ENCODE measurements at regions of chr9 and their contacts with region 1.

Region 1: GRCh38 chr9:19028835-19029451 is 4.1 kb downstream of the SAXO1 start:
- DNase-seq: peak; percentile 81
- H3K4me3 Mint-ChIP-seq: no peak overlapping the region
- H3K27ac Mint-ChIP-seq: no peak overlapping the region
- H3K4me1 Mint-ChIP-seq: peaks cover 11% of the 10 kb centered on the region
- H3K27me3 Mint-ChIP-seq: peaks cover 11% of the 10 kb centered on the region

Region 2: DNA sequence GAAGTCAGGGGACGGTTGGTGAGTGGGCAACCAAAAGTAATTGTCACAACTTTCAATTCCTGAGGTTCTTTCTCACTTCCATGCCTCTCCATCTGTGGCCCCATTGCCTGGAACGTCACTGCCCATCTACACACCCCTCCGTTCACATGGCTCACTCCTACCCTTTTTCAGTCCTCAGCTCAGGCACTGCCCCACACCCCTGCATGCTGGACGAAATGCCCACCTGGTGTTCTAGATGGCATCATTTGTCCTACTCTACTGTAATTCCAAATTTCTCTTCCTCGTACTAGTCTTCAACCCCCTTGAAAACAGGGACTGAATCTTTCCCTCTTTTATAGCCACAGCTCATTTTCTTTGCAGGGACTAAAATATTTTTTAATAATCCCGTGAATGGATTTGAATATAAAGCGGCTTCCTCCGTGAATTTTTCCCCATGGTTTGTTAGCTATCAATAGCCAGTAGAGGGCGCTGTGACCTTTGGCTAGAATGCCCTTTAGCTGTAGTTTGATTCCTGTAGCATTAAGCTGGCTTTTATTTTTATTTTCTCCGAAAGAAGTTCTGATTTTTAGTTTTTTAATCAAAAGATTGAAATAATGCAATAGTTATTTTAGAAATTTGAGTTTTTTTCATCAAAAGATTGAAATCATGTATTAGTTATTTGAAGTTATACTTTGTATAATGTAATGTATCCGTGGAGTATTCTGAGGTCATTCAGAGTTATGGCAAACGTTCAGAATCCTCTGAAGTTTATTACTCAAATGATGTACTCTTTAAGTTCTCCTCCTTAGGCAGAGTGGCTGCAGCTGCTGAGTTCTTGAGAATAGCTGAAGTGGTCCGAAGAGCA is 1218.0 kb before region 1 on chr9:
- intact Hi-C with region 1: loop called (anchors 5 kb)
- DNase-seq: peak; percentile 80
- H3K4me3 Mint-ChIP-seq: no peak overlapping the region
- H3K27ac Mint-ChIP-seq: no peak overlapping the region
- H3K4me1 Mint-ChIP-seq: no peaks in the 10 kb centered on the region
- H3K27me3 Mint-ChIP-seq: no peaks in the 10 kb centered on the region

Region 3: GRCh38 chr9:18255158-18255629 is 773.7 kb before region 1 on chr9:
- intact Hi-C with region 1: loop called (anchors 1 kb)
- DNase-seq: peak; percentile 90
- H3K4me3 Mint-ChIP-seq: no peak overlapping the region
- H3K27ac Mint-ChIP-seq: no peak overlapping the region
- H3K4me1 Mint-ChIP-seq: no peaks in the 10 kb centered on the region
- H3K27me3 Mint-ChIP-seq: peaks cover 7% of the 10 kb centered on the region

Region 4: GRCh38 chr9:18442629-18443491 is 586.1 kb before region 1 on chr9:
- intact Hi-C with region 1: loop called (anchors 10 kb)
- DNase-seq: peak; percentile 82
- H3K4me3 Mint-ChIP-seq: no peak overlapping the region
- H3K27ac Mint-ChIP-seq: no peak overlapping the region
- H3K4me1 Mint-ChIP-seq: no peaks in the 10 kb centered on the region
- H3K27me3 Mint-ChIP-seq: peaks cover 16% of the 10 kb centered on the region

Measured in activated CD4-positive, alpha-beta T cell treated with anti-CD3 and anti-CD28 coated beads, Interleukin-2, amount 10 ng/mL, durations not matched to agents 24 days and 14 days (primary cell).